ENCODE measurements at regions of chr19 and their contacts with region 1.

Region 1: DNA sequence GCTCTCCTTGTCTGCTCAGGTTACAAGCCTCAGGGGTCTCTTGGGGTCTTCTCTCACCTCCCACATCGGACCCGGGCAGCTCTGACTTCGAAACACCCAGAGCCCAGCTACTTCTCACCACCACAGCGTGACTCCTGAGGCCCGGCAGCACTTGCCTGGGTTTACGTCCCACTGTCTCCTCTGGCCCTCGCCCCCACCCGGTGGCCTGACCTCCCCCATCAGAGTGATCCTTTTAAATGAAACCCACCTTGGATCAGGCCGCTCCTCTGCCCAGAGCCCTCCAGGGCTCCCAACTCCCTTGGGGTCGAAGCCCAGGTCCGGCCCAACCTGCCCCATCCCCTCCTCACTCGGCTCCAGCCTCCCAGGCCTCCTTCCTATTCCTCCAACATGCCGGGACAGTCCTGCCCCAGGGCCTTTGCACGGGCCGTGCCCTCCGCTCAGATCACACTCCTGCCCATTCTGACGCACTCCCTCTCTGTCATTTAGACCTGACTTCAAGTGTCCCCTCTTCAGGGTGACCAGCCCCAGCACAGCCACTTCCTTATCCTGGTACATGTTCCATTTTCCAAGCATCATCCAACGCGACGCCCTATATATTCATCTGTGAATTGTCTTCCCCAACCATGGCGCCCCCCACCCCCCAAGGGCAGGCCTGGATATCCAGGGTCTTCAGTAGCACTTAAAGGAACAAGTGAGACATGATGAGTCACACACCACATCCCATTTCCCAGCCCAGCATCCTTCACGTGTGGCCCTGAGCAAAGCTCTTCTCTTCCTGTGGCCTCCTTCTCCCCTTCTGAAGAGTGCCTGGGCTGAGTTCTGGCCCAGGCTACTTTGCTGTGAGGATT is 12.2 kb downstream of the PLIN4 start:
- DNase-seq: no peak
- H3K4me3 ChIP-seq: no peak overlapping the region
- H3K27ac ChIP-seq: no peak overlapping the region
- H3K4me1 ChIP-seq: no peaks in the 10 kb centered on the region
- H3K27me3 ChIP-seq: peaks cover 2 to 16% (median 13%) of the 10 kb centered on the region in 4 experiments; a peak in 6 of 7 replicates
- CTCF ChIP-seq: no peak
- EP300 ChIP-seq: no peak
- POLR2A ChIP-seq: no peak
- RAD21 ChIP-seq: no peak

Region 2: DNA sequence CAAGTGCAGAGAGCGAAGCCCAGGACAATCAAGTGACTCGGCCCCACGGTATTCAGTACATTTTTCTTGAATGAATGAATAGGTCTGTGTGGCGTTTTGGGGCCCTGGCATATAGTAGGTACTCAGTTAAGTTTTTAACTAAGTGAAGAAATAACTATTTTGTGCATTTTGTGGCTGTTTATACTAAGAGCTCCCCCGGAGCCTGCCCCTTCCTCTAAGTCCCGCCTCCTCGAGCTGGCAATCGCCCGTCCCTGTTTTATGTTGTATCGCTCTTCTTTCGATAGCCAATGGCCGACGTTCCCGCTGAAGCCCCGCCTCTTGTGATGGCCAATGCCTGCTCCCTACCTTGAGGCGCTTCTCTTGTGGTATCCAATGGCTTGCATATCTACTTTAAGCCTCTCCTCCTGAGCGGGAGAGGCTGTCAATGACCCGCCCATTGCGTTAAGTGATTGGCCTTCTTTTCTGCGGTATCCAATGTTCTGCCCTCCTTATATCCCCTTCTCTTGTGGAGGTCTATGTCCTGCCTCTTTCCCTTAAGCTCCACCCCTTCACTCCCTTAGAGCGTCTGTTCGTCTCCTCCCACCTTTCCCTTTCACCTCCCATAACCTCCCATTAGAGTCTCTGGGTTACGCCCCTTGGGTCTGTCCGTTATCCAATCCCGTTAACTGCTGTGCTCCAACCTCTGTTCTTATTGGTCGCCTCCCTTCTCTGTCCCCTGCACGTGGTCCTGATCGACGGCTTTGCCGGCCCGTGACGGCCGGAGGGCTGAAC is 34.5 kb before region 1 on chr19:
- CTCF ChIA-PET with region 1: no interaction called
- POLR2A ChIA-PET with region 1: interaction called, 10 read pairs
- DNase-seq: peak; percentile 92 to 99
- H3K4me3 ChIP-seq: peak overlapping the region; percentile 37 to 99 (median 60)
- H3K27ac ChIP-seq: peak overlapping the region; percentile 35; the same call in 1 of the 2 replicates
- H3K4me1 ChIP-seq: peaks cover 0 to 16% (median 11%) of the 10 kb centered on the region in 4 experiments; a peak in 5 of 7 replicates
- H3K27me3 ChIP-seq: no peaks in the 10 kb centered on the region; a peak in 1 of 7 replicates
- CTCF ChIP-seq: no peak
- EP300 ChIP-seq: no peak
- POLR2A ChIP-seq: no peak; a peak in 1 of 3 replicates
- RAD21 ChIP-seq: no peak

Region 3: DNA sequence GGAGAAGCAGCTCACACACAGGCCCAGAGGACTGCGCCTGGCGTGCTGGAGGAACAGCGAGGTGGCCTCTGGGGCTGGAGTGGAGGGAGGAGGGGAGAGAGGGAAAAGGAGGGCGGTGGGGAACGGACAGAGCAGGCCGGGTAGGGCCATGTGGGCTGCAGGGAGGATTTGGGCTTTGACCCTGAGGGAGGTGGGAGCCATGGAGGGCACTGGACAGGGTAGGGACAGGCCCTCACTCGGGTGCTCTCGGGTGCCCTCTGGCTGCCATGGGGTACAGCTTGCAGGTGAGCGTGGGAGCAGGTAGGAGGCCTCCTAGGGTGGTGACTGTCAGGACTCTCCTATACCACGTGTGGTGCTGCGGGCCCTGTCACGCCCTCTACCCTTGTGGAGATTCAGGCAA is 10.7 kb before region 1 on chr19:
- CTCF ChIA-PET with region 1: interaction called, 5 read pairs
- POLR2A ChIA-PET with region 1: interaction called, 19 read pairs
- DNase-seq: peak in 1 of 2 experiments; percentile 56
- H3K4me3 ChIP-seq: no peak overlapping the region
- H3K27ac ChIP-seq: no peak overlapping the region
- H3K4me1 ChIP-seq: no peaks in the 10 kb centered on the region
- H3K27me3 ChIP-seq: no peaks in the 10 kb centered on the region; a peak in 1 of 7 replicates
- CTCF ChIP-seq: peak; percentile 38 to 51 (median 46)
- EP300 ChIP-seq: no peak
- POLR2A ChIP-seq: no peak
- RAD21 ChIP-seq: peak; percentile 5 to 20; a peak in 1 of 4 replicates

Region 4: GRCh38 chr19:4518345-4519171 is 12.4 kb after region 1 on chr19 and contains the start of gene PLIN4:
- CTCF ChIA-PET with region 1: interaction called, 40 read pairs
- POLR2A ChIA-PET with region 1: interaction called, 27 read pairs
- DNase-seq: peak in 1 of 2 experiments; percentile 54
- H3K4me3 ChIP-seq: no peak within 1 kb of the TSS
- H3K27ac ChIP-seq: no peak within 1 kb of the TSS
- H3K4me1 ChIP-seq: peaks cover 0 to 3% (median under 1%) of the 10 kb centered on the region in 4 experiments; a peak in 4 of 7 replicates
- H3K27me3 ChIP-seq: peaks cover 0 to 28% (median 20%) of the 10 kb centered on the region in 4 experiments; a peak in 5 of 7 replicates
- CTCF ChIP-seq: no peak
- EP300 ChIP-seq: no peak
- POLR2A ChIP-seq: no peak
- RAD21 ChIP-seq: no peak
- total RNA-seq, gene PLIN4: 0.45 and 0.54 TPM in 2 replicates